Activated CD4-positive, alpha-beta memory T cell treated with anti-CD3 and anti-CD28 coated beads, Interleukin-2, amount 10 ng/mL, durations not matched to agents 7 days and 5 days (primary cell): ENCODE measurements at regions of chr2 and their contacts with region 1.

Region 1: GRCh38 chr2:196263181-196263747 is 91.9 kb upstream of the STK17B start:
- DNase-seq: peak; percentile 56
- H3K4me3 Mint-ChIP-seq: peak overlapping the region; percentile 76
- H3K27ac Mint-ChIP-seq: peak overlapping the region; percentile 88
- H3K4me1 Mint-ChIP-seq: peaks cover 76% of the 10 kb centered on the region
- H3K27me3 Mint-ChIP-seq: no peaks in the 10 kb centered on the region

Region 2: GRCh38 chr2:196068271-196069209 is 194.7 kb before region 1 on chr2 and contains the start of gene DNAH7:
- CTCF ChIA-PET with region 1: interaction called, 10 read pairs
- POLR2A ChIA-PET with region 1: no interaction called
- DNase-seq: peak; percentile 94
- H3K4me3 Mint-ChIP-seq: peak within 1 kb of the TSS; percentile 78
- H3K27ac Mint-ChIP-seq: peak within 1 kb of the TSS; percentile 38
- H3K4me1 Mint-ChIP-seq: peaks cover 12% of the 10 kb centered on the region
- H3K27me3 Mint-ChIP-seq: peaks cover 17% of the 10 kb centered on the region
- total RNA-seq, gene DNAH7: not detected

Region 3: DNA sequence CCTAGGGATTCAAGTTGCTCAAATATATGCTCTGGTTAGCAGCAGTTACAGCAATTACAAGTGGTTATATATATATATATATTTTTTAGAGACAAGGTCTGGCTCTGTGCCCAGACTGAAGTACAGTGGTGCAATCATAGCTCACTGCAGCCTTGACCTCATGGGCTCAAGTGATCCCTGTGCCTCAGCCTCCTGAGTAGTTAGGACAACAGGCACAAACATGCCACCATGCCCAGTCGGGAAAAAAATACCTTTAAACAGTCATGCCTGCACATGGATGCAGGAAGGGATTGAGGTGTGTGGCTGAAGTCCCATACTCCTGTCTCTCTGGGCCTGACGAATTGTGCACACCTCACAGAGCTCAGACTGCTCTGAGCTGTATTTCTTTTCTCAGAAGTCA is 175.1 kb before region 1 on chr2:
- CTCF ChIA-PET with region 1: no interaction called
- POLR2A ChIA-PET with region 1: no interaction called
- DNase-seq: no peak
- H3K4me3 Mint-ChIP-seq: no peak overlapping the region
- H3K27ac Mint-ChIP-seq: no peak overlapping the region
- H3K4me1 Mint-ChIP-seq: peaks cover 20% of the 10 kb centered on the region
- H3K27me3 Mint-ChIP-seq: peaks cover under 1% of the 10 kb centered on the region

Region 4: DNA sequence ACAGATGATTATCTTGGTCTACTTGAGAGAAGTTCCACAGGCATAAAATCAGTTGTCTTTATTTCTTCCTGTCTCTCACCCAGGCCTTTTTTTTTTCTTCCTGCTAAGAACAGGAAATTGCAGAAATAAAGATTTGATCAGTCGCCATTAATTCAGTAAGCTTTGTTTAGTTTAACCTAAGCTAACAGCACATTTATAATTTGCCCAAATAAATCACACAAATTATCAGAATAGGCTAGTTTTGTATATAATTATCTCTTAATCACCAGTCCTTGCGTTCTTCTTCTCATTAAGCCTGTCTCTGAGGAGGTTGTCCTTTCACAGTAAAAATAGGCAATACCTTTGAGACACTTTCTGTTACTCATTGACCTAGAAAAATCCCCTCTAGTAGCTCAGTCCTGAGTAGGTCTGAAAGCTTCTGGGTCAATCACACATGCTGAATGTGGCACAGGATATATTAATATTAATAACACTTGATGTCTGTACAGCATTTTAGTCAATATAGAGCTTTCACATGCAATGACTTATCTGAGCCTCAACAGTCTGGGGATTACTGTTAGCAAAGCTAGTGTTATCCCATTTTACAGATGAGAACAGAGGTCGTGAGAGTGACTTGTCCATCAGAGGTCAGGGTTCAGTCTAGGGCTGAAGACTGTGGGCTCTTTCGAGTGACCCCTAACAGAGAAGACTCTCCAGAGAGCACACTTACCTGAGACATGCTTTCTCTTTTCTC is 80.7 kb before region 1 on chr2:
- CTCF ChIA-PET with region 1: interaction called, 8 read pairs
- POLR2A ChIA-PET with region 1: interaction called, 148 read pairs
- DNase-seq: no peak
- H3K4me3 Mint-ChIP-seq: peak overlapping the region; percentile 75
- H3K27ac Mint-ChIP-seq: peak overlapping the region; percentile 98
- H3K4me1 Mint-ChIP-seq: peaks cover 83% of the 10 kb centered on the region
- H3K27me3 Mint-ChIP-seq: no peaks in the 10 kb centered on the region

Region 5: GRCh38 chr2:196205881-196206435 is 57.3 kb before region 1 on chr2:
- CTCF ChIA-PET with region 1: no interaction called
- POLR2A ChIA-PET with region 1: interaction called, 27 read pairs
- DNase-seq: no peak
- H3K4me3 Mint-ChIP-seq: no peak overlapping the region
- H3K27ac Mint-ChIP-seq: no peak overlapping the region
- H3K4me1 Mint-ChIP-seq: peaks cover 41% of the 10 kb centered on the region
- H3K27me3 Mint-ChIP-seq: no peaks in the 10 kb centered on the region

Region 6: GRCh38 chr2:196239622-196240587 is 23.4 kb before region 1 on chr2:
- CTCF ChIA-PET with region 1: interaction called, 61 read pairs
- POLR2A ChIA-PET with region 1: interaction called, 343 read pairs
- DNase-seq: peak; percentile 93
- H3K4me3 Mint-ChIP-seq: peak overlapping the region; percentile 57
- H3K27ac Mint-ChIP-seq: peak overlapping the region; percentile 93
- H3K4me1 Mint-ChIP-seq: peaks cover 74% of the 10 kb centered on the region
- H3K27me3 Mint-ChIP-seq: no peaks in the 10 kb centered on the region

Region 7: GRCh38 chr2:196277002-196277401 is 13.7 kb after region 1 on chr2:
- CTCF ChIA-PET with region 1: interaction called, 30 read pairs
- POLR2A ChIA-PET with region 1: interaction called, 53 read pairs
- DNase-seq: peak; percentile 42
- H3K4me3 Mint-ChIP-seq: peak overlapping the region; percentile 27
- H3K27ac Mint-ChIP-seq: no peak overlapping the region
- H3K4me1 Mint-ChIP-seq: peaks cover 55% of the 10 kb centered on the region
- H3K27me3 Mint-ChIP-seq: no peaks in the 10 kb centered on the region